CD4-positive, alpha-beta memory T cell (primary cell): ENCODE measurements at regions of chr2 and their contacts with region 1.

Region 1: GRCh38 chr2:233267516-233268245 is 16.2 kb downstream of the ATG16L1 start:
- DNase-seq: peak; percentile 90 to 96 (median 93)
- H3K4me3 ChIP-seq: peak overlapping the region in 1 of 2 donors; percentile 39
- H3K4me3 Mint-ChIP-seq: peak overlapping the region; percentile 52 to 89 (median 79)
- H3K27ac ChIP-seq: peak overlapping the region; percentile 81
- H3K27ac Mint-ChIP-seq: peak overlapping the region; percentile 96 to 99 (median 97)
- H3K4me1 ChIP-seq: peaks cover 68% of the 10 kb centered on the region
- H3K4me1 Mint-ChIP-seq: peaks cover 39 to 76% (median 64%) of the 10 kb centered on the region in 4 donors
- H3K27me3 ChIP-seq: no peaks in the 10 kb centered on the region
- H3K27me3 Mint-ChIP-seq: no peaks in the 10 kb centered on the region

Region 2: DNA sequence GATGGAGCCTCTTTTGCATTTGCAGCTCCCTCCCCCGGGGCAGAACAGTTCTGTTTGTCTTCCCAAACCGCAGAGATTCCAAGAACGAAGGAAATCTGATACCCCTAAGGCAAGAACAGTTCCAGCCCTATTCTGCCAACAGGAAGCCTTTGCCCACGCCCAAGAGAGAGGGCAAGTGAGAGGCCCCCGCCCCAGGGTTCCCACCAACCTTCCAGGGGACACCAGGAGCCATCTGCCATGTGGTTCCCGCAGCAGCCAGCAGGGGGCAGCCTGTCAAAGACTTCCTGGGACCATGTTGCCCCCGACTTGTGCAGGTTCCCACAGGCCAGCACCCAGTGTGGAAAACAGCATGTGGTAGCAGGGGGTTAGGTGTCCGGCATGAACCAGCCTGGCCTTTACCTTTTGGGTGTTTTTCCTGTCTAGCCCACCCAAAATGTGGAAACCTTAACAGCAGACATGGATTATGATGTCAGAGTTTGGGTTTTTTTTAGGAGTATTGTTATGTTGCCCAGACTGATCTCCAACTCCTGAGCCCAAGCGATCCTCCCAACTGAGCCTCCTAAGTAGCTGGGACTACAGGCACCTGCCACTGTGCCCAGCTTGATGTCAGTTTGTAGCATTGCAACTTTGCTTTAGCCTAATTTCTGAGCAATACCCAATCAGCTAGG is 656.0 kb before region 1 on chr2:
- CTCF ChIA-PET with region 1: no interaction called
- POLR2A ChIA-PET with region 1: no interaction called
- intact Hi-C with region 1: loop called (anchors 5 kb)
- DNase-seq: peak; percentile 42 to 58 (median 47)
- H3K4me3 ChIP-seq: no peak overlapping the region
- H3K4me3 Mint-ChIP-seq: no peak overlapping the region
- H3K27ac ChIP-seq: no peak overlapping the region
- H3K27ac Mint-ChIP-seq: no peak overlapping the region
- H3K4me1 ChIP-seq: no peaks in the 10 kb centered on the region
- H3K4me1 Mint-ChIP-seq: peaks cover 0 to 2% (median 0%) of the 10 kb centered on the region in 4 donors
- H3K27me3 ChIP-seq: no peaks in the 10 kb centered on the region
- H3K27me3 Mint-ChIP-seq: peaks cover 0 to 3% of the 10 kb centered on the region in 2 donors

Region 3: DNA sequence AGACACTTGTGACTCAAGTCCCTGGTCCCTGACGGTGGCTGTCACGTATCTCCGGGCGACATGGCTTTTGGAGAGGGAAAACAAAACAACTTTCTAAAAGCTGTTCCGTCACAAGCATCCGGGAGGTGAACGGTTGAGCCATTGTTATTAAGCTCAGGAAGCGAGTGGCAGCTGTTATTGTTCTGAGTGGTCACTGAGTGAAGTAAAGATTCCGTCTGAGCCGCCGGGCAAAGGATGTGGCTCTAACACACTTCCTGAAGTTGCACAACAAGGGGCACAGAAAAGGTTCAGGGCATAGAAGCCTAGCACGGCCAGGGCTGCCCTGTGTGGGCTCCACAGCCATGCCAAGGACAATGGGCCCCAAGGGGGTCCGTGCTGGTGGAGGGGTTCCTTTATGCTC is 183.2 kb before region 1 on chr2:
- CTCF ChIA-PET with region 1: interaction called, 4 read pairs
- POLR2A ChIA-PET with region 1: interaction called, 14 read pairs
- intact Hi-C with region 1: loop called (anchors 5 kb)
- DNase-seq: peak; percentile 55 to 87 (median 63)
- H3K4me3 ChIP-seq: no peak overlapping the region
- H3K4me3 Mint-ChIP-seq: peak overlapping the region; percentile 80 to 95 (median 84)
- H3K27ac ChIP-seq: peak overlapping the region; percentile 67
- H3K27ac Mint-ChIP-seq: peak overlapping the region in 6 of 7 donors; percentile 94 to 98 (median 97)
- H3K4me1 ChIP-seq: peaks cover 89% of the 10 kb centered on the region
- H3K4me1 Mint-ChIP-seq: peaks cover 73 to 99% (median 87%) of the 10 kb centered on the region in 4 donors
- H3K27me3 ChIP-seq: no peaks in the 10 kb centered on the region
- H3K27me3 Mint-ChIP-seq: peaks cover 0 to 1% of the 10 kb centered on the region in 2 donors

Region 4: DNA sequence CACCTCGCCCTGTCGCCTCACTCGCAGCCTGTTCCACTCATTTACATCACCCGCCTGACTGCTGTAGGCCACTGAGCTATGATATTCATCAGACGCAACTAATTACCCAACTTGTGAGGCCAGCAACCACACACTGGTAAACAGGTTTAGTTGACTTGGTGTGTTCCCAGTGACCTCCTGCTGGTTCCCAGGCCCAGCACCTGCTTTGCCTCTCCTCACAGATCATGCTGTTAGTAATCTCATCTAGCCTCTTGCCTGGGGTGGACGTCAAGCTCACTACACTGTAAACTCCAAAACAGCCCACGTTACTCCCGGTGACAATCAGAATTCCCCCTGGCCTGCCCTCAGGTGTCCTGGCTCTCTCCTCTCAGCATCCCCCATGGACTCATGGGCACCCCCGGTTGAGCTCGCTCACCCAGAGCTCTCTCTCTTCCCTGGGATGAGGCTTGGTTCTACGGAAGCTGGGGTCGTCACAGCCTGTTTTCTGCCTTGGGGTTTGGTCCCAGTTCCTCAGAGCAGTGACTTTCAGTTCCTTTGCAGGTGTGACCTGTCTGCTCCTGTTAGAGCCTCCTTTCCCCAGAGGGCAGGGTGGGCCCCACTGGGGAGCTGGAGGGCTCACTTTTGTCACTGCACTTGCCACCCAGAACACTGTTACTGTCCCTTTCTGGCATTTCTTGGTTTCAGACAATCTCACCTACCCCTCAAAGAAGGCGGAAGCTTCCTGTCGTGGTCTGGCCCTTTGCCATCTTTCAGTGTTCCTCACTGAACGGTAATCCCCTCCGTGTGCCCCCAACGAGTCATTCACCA is 167.3 kb before region 1 on chr2:
- CTCF ChIA-PET with region 1: no interaction called
- POLR2A ChIA-PET with region 1: no interaction called
- intact Hi-C with region 1: no loop called
- DNase-seq: peak; percentile 49 to 82 (median 59)
- H3K4me3 ChIP-seq: no peak overlapping the region
- H3K4me3 Mint-ChIP-seq: peak overlapping the region; percentile 43 to 88 (median 76)
- H3K27ac ChIP-seq: peak overlapping the region; percentile 41
- H3K27ac Mint-ChIP-seq: peak overlapping the region; percentile 77 to 96 (median 87)
- H3K4me1 ChIP-seq: peaks cover 64% of the 10 kb centered on the region
- H3K4me1 Mint-ChIP-seq: peaks cover 50 to 84% (median 66%) of the 10 kb centered on the region in 4 donors
- H3K27me3 ChIP-seq: no peaks in the 10 kb centered on the region
- H3K27me3 Mint-ChIP-seq: no peaks in the 10 kb centered on the region

Region 5: GRCh38 chr2:233331536-233331935 is 63.9 kb after region 1 on chr2:
- CTCF ChIA-PET with region 1: interaction called, 6 read pairs
- POLR2A ChIA-PET with region 1: interaction called, 72 read pairs
- intact Hi-C with region 1: loop called (anchors 1 kb)
- DNase-seq: peak; percentile 84 to 93 (median 86)
- H3K4me3 ChIP-seq: peak overlapping the region in 1 of 2 donors; percentile 39
- H3K4me3 Mint-ChIP-seq: peak overlapping the region; percentile 11 to 83 (median 72)
- H3K27ac ChIP-seq: peak overlapping the region; percentile 73
- H3K27ac Mint-ChIP-seq: peak overlapping the region; percentile 82 to 99 (median 94)
- H3K4me1 ChIP-seq: peaks cover 63% of the 10 kb centered on the region
- H3K4me1 Mint-ChIP-seq: peaks cover 26 to 65% (median 43%) of the 10 kb centered on the region in 4 donors
- H3K27me3 ChIP-seq: no peaks in the 10 kb centered on the region
- H3K27me3 Mint-ChIP-seq: no peaks in the 10 kb centered on the region

Region 6: DNA sequence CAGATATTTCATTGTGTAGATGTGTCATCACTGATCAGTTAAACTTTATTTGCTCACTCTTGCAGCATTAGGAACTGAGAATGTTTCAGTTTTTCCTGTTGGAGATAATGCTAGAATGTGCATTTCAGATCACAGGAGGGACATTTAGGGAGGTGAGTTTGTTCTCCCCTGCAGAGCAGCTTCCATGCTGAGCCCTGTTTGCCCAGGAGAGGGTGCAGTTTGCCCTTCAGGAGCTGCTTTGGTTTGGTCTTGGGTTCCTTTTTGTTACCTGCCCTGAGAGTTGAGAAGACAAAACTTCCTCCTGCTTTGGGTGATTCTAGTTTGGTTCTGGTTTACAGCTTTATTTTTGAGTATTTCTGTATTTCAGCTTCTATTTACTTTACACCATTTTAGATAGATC is 136.5 kb after region 1 on chr2:
- CTCF ChIA-PET with region 1: interaction called, 4 read pairs
- POLR2A ChIA-PET with region 1: interaction called, 10 read pairs
- intact Hi-C with region 1: no loop called
- DNase-seq: peak; percentile 74 to 78 (median 75)
- H3K4me3 ChIP-seq: no peak overlapping the region
- H3K4me3 Mint-ChIP-seq: peak overlapping the region in 2 of 8 donors; percentile 1
- H3K27ac ChIP-seq: no peak overlapping the region
- H3K27ac Mint-ChIP-seq: peak overlapping the region; percentile 14 to 91 (median 77)
- H3K4me1 ChIP-seq: peaks cover 44% of the 10 kb centered on the region
- H3K4me1 Mint-ChIP-seq: peaks cover 40 to 77% (median 58%) of the 10 kb centered on the region in 4 donors
- H3K27me3 ChIP-seq: no peaks in the 10 kb centered on the region
- H3K27me3 Mint-ChIP-seq: no peaks in the 10 kb centered on the region